ENCODE measurements at regions of chr1 and their contacts with region 1.

Region 1: GRCh38 chr1:24502709-24503058 is at the start of gene RCAN3:
- DNase-seq: peak; percentile 97
- H3K4me3 Mint-ChIP-seq: peak within 1 kb of the TSS; percentile 95
- H3K27ac Mint-ChIP-seq: peak within 1 kb of the TSS; percentile 99
- H3K4me1 Mint-ChIP-seq: peaks cover 65% of the 10 kb centered on the region
- H3K27me3 Mint-ChIP-seq: no peaks in the 10 kb centered on the region
- total RNA-seq, gene RCAN3: 31.2 and 31.6 TPM in 2 replicates

Region 2: DNA sequence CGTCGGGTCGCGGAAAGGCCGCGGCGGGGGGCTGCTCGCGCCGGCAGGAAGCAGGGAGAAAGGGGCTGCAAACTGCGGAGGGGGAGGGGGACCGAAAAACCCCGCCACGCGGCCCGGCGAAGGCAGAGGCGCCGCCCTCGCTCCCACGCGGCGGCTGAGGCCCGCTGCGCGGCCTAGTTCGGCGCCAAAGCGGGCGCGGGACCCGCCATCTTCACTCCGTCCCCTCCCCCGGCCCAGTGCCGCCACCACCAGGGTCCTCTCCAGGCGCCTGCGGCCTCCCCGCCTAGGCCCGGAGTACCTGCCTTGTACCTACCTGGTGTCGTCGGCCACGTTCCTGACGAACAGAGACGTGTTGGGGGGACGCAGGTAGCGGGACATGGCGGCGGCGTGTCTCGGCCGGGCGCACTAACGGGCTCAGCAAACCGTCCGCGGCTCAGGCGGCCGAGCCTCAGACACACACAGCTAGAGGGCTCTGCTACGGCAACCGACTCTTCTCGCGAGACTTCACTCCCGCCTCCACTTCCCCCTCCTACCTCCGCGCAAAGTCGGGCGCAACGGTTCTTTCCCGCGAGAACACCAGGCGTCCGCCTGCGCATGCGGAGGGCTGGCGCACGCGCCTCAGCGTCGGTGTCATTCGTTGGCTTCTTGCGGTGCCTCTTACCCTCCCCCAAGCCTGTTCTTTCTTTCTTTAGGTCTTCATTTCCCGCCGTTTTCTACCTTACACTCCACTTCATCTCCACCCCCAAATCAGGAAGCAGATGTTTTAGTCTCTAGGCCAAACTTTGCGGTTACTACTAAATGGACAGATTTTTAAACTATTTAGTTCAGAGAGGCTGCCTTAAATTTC is 522.6 kb before region 1 on chr1 and contains the start of gene SRSF10:
- intact Hi-C with region 1: loop called (anchors 10 kb)
- DNase-seq: peak; percentile 99
- H3K4me3 Mint-ChIP-seq: peak within 1 kb of the TSS; percentile 98
- H3K27ac Mint-ChIP-seq: peak within 1 kb of the TSS; percentile 96
- H3K4me1 Mint-ChIP-seq: peaks cover 30% of the 10 kb centered on the region
- H3K27me3 Mint-ChIP-seq: peaks cover 2% of the 10 kb centered on the region
- total RNA-seq, gene SRSF10: 236 and 247 TPM in 2 replicates

Region 3: DNA sequence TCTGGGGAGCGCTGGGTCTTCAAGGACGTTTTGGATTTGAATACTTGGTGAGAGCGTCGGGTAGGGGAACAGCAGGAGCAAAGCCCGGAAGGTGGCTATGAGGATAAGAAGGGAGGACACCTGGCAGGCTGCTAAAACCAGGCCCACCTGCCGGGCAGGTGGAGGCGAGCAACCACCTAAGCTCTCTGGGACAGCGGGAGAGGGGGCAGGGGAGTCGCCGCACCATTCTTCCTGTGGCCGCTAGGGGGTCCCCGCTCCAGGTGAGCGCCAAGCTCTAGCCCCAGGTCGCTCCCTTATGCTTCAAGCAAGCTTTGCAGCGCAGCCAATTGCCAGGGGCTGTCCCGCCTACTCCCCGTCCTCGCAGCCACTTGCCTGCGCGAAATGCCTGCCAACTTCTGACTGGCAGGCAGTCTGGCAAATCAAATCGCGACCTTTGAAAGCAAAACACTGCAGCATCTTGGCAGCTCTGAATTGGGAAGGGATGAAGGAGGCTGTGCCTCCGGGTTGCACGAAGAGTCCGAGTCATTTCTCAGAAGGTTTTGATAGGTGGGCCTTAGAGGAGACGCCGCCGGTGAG is 87.3 kb before region 1 on chr1 and contains the start of gene NIPAL3:
- intact Hi-C with region 1: loop called (anchors 1 kb)
- DNase-seq: peak; percentile 99
- H3K4me3 Mint-ChIP-seq: peak within 1 kb of the TSS; percentile 88
- H3K27ac Mint-ChIP-seq: peak within 1 kb of the TSS; percentile 90
- H3K4me1 Mint-ChIP-seq: peaks cover 53% of the 10 kb centered on the region
- H3K27me3 Mint-ChIP-seq: no peaks in the 10 kb centered on the region
- total RNA-seq, gene NIPAL3: 25.1 and 26.3 TPM in 2 replicates

Region 4: GRCh38 chr1:24491577-24492360 is 10.9 kb before region 1 on chr1:
- intact Hi-C with region 1: loop called (anchors 1 kb)
- DNase-seq: no peak
- H3K4me3 Mint-ChIP-seq: no peak overlapping the region
- H3K27ac Mint-ChIP-seq: no peak overlapping the region
- H3K4me1 Mint-ChIP-seq: peaks cover 23% of the 10 kb centered on the region
- H3K27me3 Mint-ChIP-seq: no peaks in the 10 kb centered on the region

Region 5: DNA sequence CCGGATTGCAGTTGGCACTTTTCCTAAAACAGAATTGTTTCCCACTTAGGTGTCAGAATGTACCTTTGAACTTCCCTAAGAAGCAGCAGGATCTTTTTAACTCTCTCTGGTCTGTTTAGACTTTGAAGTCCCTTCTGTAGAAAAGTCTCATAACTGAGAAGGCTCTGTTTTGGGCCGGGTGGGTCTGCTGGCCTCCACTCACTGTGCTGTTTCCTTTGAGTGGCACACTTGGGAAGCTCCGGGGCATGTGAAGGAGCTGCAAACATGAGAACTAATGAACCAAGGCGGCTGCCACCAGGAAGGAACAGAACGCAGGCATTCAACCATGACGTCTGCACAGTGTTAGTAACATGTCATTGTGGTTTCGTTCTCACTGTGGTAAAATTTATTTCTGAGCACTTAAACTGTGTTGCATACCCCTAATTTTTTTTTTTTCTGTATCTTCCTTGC is 33.7 kb after region 1 on chr1:
- intact Hi-C with region 1: loop called (anchors 1 kb)
- DNase-seq: peak; percentile 87
- H3K4me3 Mint-ChIP-seq: peak overlapping the region; percentile 90
- H3K27ac Mint-ChIP-seq: peak overlapping the region; percentile 97
- H3K4me1 Mint-ChIP-seq: peaks cover 56% of the 10 kb centered on the region
- H3K27me3 Mint-ChIP-seq: no peaks in the 10 kb centered on the region